GM10248 (cell line): ENCODE measurements at regions of chr1 and their contacts with region 1.

Region 1: DNA sequence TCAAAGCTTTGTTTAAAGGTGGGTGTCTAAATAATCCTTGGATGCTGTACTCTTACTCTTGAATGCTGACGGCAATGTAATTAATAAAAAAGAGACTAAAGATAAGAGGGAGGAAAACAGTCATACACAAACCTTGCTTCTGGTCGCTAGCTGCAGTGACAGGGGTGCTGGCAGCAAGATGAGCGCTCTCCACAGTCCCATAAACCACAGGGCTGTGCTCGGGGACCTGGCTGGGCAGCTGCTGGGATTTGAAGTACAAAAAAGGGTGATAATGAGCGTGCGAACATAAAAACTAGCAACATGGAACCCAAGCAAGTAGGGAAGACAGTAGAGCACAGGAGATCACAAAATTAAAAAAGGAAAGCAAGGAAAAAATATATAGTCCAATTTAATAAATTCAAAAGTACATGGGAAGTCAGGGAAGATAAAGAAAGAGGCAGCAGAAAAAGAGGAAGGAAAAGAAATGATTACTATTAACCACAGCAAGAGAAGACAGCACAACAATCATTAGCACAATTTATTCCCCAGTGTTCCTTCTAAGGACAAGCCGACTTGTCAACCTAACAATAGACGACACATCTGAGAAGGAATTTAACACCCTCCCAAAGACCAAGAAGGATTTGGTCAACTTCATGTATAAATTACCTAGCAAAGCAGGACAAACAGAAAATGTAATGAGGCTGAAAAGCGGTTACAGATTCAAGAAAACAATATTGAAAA is 162.9 kb upstream of the HP1BP3 start:
- DNase-seq: no peak
- CTCF ChIP-seq: no peak

Region 2: DNA sequence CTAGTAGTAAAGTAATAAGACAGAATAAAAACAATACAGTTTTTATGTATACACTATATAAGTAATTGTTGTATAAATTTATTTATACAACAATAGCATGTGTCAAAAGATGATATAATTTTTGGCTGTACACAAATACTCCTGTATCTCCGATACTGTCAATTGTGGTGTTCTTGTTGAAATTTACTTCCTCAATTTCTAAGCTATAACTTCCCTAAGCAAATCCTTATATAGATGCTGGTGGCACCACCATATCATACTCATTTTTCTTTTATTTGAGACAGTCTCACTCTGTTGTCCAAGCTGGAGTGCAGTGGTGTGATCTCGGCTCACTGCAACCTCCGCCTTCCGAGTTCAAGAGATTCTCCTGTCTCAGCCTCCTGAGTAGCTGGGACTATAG is 21.9 kb before region 1 on chr1:
- CTCF ChIA-PET with region 1: interaction called, 13 read pairs
- POLR2A ChIA-PET with region 1: no interaction called
- DNase-seq: no peak
- CTCF ChIP-seq: no peak

Region 3: GRCh38 chr1:20964540-20965484 is 14.8 kb after region 1 on chr1:
- CTCF ChIA-PET with region 1: interaction called, 10 read pairs
- POLR2A ChIA-PET with region 1: no interaction called
- DNase-seq: peak; percentile 53
- CTCF ChIP-seq: no peak